CD4-positive, alpha-beta memory T cell (primary cell): ENCODE measurements at regions of chr4 and their contacts with region 1.

Region 1: GRCh38 chr4:136526517-136526916 is 1005.8 kb downstream of the PCDH18 start:
- DNase-seq: no peak
- H3K4me3 ChIP-seq: no peak overlapping the region
- H3K4me3 Mint-ChIP-seq: no peak overlapping the region
- H3K27ac ChIP-seq: no peak overlapping the region
- H3K27ac Mint-ChIP-seq: no peak overlapping the region
- H3K4me1 ChIP-seq: no peaks in the 10 kb centered on the region
- H3K4me1 Mint-ChIP-seq: no peaks in the 10 kb centered on the region
- H3K27me3 ChIP-seq: no peaks in the 10 kb centered on the region
- H3K27me3 Mint-ChIP-seq: no peaks in the 10 kb centered on the region

Region 2: GRCh38 chr4:136516371-136516770 is 10.1 kb before region 1 on chr4:
- CTCF ChIA-PET with region 1: no interaction called
- POLR2A ChIA-PET with region 1: no interaction called
- intact Hi-C with region 1: no loop called
- DNase-seq: no peak
- H3K4me3 ChIP-seq: no peak overlapping the region
- H3K4me3 Mint-ChIP-seq: no peak overlapping the region
- H3K27ac ChIP-seq: no peak overlapping the region
- H3K27ac Mint-ChIP-seq: no peak overlapping the region
- H3K4me1 ChIP-seq: no peaks in the 10 kb centered on the region
- H3K4me1 Mint-ChIP-seq: no peaks in the 10 kb centered on the region
- H3K27me3 ChIP-seq: no peaks in the 10 kb centered on the region
- H3K27me3 Mint-ChIP-seq: no peaks in the 10 kb centered on the region

Region 3: GRCh38 chr4:136571315-136571714 is 44.8 kb after region 1 on chr4:
- CTCF ChIA-PET with region 1: no interaction called
- POLR2A ChIA-PET with region 1: no interaction called
- intact Hi-C with region 1: loop called (anchors 1 kb)
- DNase-seq: no peak
- H3K4me3 ChIP-seq: no peak overlapping the region
- H3K4me3 Mint-ChIP-seq: no peak overlapping the region
- H3K27ac ChIP-seq: no peak overlapping the region
- H3K27ac Mint-ChIP-seq: no peak overlapping the region
- H3K4me1 ChIP-seq: no peaks in the 10 kb centered on the region
- H3K4me1 Mint-ChIP-seq: no peaks in the 10 kb centered on the region
- H3K27me3 ChIP-seq: no peaks in the 10 kb centered on the region
- H3K27me3 Mint-ChIP-seq: no peaks in the 10 kb centered on the region